Activated B cell treated with CpG ODN at 0.5 μM for 24 hours (primary cell): ENCODE measurements at regions of chr11 and their contacts with region 1.

Region 1: GRCh38 chr11:62542750-62543567 is 3.6 kb downstream of the AHNAK start:
- DNase-seq: peak; percentile 74
- ATAC-seq: peak; percentile 29
- H3K4me3 Mint-ChIP-seq: peak overlapping the region; percentile 95
- H3K27ac Mint-ChIP-seq: peak overlapping the region; percentile 97
- H3K4me1 Mint-ChIP-seq: peaks cover 78% of the 10 kb centered on the region
- H3K27me3 Mint-ChIP-seq: no peaks in the 10 kb centered on the region
- CTCF ChIP-seq: peak; percentile 78

Region 2: GRCh38 chr11:62394825-62395538 is 148.0 kb before region 1 on chr11:
- CTCF ChIA-PET with region 1: interaction called, 22 read pairs
- POLR2A ChIA-PET with region 1: no interaction called
- intact Hi-C with region 1: no loop called
- DNase-seq: no peak
- ATAC-seq: peak; percentile 79
- H3K4me3 Mint-ChIP-seq: no peak overlapping the region
- H3K27ac Mint-ChIP-seq: no peak overlapping the region
- H3K4me1 Mint-ChIP-seq: no peaks in the 10 kb centered on the region
- H3K27me3 Mint-ChIP-seq: peaks cover 6% of the 10 kb centered on the region
- CTCF ChIP-seq: no peak

Region 3: GRCh38 chr11:62444236-62444833 is 98.6 kb before region 1 on chr11:
- CTCF ChIA-PET with region 1: interaction called, 6 read pairs
- POLR2A ChIA-PET with region 1: interaction called, 31 read pairs
- intact Hi-C with region 1: loop called (anchors 1 kb)
- DNase-seq: peak; percentile 58
- ATAC-seq: peak; percentile 86
- H3K4me3 Mint-ChIP-seq: peak overlapping the region; percentile 83
- H3K27ac Mint-ChIP-seq: peak overlapping the region; percentile 95
- H3K4me1 Mint-ChIP-seq: peaks cover 29% of the 10 kb centered on the region
- H3K27me3 Mint-ChIP-seq: no peaks in the 10 kb centered on the region
- CTCF ChIP-seq: no peak

Region 4: GRCh38 chr11:62497132-62497915 is 45.6 kb before region 1 on chr11:
- CTCF ChIA-PET with region 1: interaction called, 10 read pairs
- POLR2A ChIA-PET with region 1: interaction called, 9 read pairs
- intact Hi-C with region 1: no loop called
- DNase-seq: no peak
- ATAC-seq: peak; percentile 66
- H3K4me3 Mint-ChIP-seq: no peak overlapping the region
- H3K27ac Mint-ChIP-seq: no peak overlapping the region
- H3K4me1 Mint-ChIP-seq: no peaks in the 10 kb centered on the region
- H3K27me3 Mint-ChIP-seq: peaks cover 7% of the 10 kb centered on the region
- CTCF ChIP-seq: no peak

Region 5: DNA sequence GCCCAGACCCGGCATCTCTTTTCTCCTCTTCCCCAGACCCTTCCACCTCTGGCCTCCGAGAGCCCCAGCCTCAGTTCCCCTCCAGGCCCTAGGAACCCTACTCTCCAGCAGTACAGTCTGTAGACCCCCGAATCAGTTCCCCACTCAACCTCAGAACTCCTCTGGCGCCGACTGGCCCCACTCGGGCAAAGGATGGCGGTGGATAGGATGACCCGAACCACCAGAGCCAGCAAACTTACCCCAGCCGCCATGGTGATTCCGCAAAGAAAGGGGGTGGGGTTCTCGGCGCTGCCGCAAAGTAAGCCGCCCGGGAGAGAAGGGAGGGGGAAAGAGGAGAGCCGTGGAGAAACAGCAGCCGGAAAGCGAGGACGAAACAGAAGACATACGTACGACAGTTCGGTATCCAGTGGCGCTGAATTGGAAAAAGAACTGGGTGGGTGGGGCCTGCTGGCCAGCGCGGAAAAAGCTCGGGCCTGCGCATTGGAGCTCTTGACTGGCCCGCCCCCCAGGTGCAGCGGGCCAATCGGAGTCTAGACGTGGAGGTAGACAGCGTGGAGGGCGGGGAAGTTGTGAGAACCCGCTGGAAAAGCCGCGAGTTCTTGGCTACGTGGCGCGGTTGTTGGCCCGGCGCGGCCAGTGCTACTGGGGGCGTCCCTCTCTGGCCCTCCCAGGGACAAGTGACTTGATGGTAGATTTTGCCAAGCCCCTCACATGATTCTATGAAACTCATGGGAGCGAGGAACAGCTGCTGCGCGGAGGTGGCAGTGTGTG is 30.8 kb after region 1 on chr11 and contains the start of gene EEF1G:
- CTCF ChIA-PET with region 1: interaction called, 4 read pairs
- POLR2A ChIA-PET with region 1: interaction called, 28 read pairs
- intact Hi-C with region 1: no loop called
- DNase-seq: peak; percentile 92
- ATAC-seq: peak; percentile 94
- H3K4me3 Mint-ChIP-seq: peak within 1 kb of the TSS; percentile 97
- H3K27ac Mint-ChIP-seq: peak within 1 kb of the TSS; percentile 94
- H3K4me1 Mint-ChIP-seq: peaks cover 51% of the 10 kb centered on the region
- H3K27me3 Mint-ChIP-seq: no peaks in the 10 kb centered on the region
- CTCF ChIP-seq: no peak
- total RNA-seq, gene EEF1G: 2,373 and 2,524 TPM in 2 replicates